GM13977 (cell line): ENCODE measurements at regions of chr5 and their contacts with region 1.

Region 1: DNA sequence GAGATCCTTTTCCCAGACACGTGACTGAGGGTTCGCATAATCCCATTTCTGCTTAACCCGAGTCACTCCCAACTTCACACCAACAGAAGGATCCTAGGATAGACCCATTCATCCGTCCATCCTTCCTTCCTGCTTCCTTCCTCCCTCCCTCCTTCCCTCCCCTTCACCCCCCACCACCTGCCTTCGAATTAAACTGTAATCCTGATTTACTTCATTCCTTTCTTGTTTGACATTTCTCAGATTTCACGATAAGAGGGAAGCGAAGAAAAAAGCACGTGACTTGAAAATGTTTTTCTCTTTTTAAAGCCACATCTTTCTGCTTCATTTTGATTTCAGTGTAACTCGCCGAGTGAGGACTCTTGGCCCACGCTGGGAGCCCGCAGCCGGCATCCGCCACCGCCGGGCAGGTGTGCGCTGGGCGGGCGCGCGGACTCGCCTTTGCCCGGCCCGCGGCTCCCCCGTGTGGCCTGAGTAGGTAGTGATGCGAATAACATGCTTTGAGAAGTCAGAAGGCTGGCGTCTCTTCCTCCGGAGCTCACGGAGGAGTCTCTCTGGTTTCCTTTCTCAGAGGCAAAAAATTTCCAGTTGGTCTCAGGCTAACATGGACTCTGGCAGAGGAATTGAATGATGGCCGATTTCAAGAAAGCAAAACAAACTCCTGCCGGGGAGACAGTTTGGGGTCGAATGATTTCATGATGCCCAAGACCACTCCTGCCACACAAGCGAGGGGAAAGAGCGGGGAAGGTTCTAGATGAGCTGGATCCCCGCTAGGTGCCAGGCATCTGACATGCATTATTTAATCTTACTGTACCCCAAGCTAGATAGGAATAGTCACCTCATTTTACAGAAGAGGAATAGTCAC is 117.7 kb downstream of the SLC12A2 start:
- DNase-seq: peak; percentile 86
- CTCF ChIP-seq: peak; percentile 87

Region 2: GRCh38 chr5:127564002-127564769 is 637.1 kb before region 1 on chr5:
- in situ Hi-C with region 1: loop called (anchors 10 kb)
- DNase-seq: peak; percentile 60
- CTCF ChIP-seq: peak; percentile 78

Region 3: DNA sequence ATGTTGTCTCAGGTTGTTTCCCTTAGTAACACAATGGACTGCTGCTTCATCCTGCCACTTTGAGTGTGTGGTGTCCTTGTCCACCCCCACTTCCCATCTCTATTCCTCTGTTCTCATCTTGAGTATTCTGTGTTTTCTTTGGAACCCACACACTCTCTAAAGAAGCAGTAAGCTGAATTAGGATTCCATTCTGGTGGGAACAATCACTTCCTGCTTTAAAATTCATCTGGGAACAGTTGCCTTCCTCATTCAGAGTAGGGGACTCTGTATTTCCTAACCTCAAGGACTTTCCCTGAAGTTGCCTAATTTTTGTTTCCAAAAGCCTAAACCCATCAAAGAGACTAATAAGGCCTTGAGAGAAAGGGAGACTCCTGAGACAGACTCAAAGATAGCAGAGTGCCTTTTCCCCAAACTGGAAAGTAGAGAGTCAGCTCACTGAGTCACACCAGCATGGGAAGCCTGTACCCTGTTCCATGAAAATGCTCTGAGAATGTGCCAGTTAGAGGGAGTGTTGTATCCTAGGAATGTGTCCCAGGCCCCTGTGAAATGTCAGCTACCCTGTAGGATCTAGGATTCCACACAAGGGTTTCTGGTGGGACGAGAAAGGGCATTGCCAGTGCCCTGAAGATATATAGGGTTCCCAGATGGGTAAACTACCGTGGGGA is 434.5 kb before region 1 on chr5:
- in situ Hi-C with region 1: loop called (anchors 10 kb)
- DNase-seq: no peak
- CTCF ChIP-seq: no peak

Region 4: GRCh38 chr5:127909078-127909477 is 292.2 kb before region 1 on chr5:
- in situ Hi-C with region 1: loop called (anchors 25 kb)
- DNase-seq: peak; percentile 32
- CTCF ChIP-seq: peak; percentile 77

Region 5: GRCh38 chr5:128271873-128272446 is 70.7 kb after region 1 on chr5:
- in situ Hi-C with region 1: no loop called
- DNase-seq: no peak
- CTCF ChIP-seq: no peak

Region 6: GRCh38 chr5:128844354-128844923 is 643.1 kb after region 1 on chr5:
- in situ Hi-C with region 1: loop called (anchors 25 kb)
- DNase-seq: no peak
- CTCF ChIP-seq: peak; percentile 31